Activated B cell treated with CpG ODN at 0.5 μM for 24 hours (primary cell): ENCODE measurements at regions of chr13 and their contacts with region 1.

Region 1: GRCh38 chr13:28658796-28659620 is at the start of gene POMP:
- DNase-seq: peak; percentile 96
- ATAC-seq: peak; percentile 92
- H3K4me3 Mint-ChIP-seq: peak within 1 kb of the TSS; percentile 98
- H3K27ac Mint-ChIP-seq: peak within 1 kb of the TSS; percentile 93
- H3K4me1 Mint-ChIP-seq: peaks cover 62% of the 10 kb centered on the region
- H3K27me3 Mint-ChIP-seq: no peaks in the 10 kb centered on the region
- CTCF ChIP-seq: no peak
- total RNA-seq, gene POMP: 54.0 and 56.0 TPM in 2 replicates

Region 2: DNA sequence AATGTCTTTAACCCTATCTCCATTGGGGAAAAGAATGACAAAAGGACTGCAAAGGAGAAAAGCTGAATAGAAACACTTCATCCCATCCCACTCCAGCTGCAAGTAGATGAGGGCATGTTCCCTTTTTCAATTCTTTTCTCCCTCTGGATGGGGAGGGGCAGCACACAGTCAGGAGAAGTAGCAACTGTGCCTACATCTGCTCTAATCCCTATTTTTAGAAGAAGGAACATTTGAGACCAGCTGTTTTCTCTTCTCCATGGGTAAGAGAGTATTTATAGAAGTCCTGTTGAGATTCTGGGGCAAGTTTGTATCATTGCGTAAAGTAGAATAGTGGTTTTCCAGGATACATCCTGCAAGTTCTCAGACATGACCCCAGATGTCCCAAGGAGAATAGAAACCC is 1243.9 kb before region 1 on chr13:
- CTCF ChIA-PET with region 1: no interaction called
- POLR2A ChIA-PET with region 1: no interaction called
- intact Hi-C with region 1: no loop called
- DNase-seq: no peak
- ATAC-seq: no peak
- H3K4me3 Mint-ChIP-seq: no peak overlapping the region
- H3K27ac Mint-ChIP-seq: no peak overlapping the region
- H3K4me1 Mint-ChIP-seq: no peaks in the 10 kb centered on the region
- H3K27me3 Mint-ChIP-seq: peaks cover 4% of the 10 kb centered on the region
- CTCF ChIP-seq: no peak

Region 3: GRCh38 chr13:28268800-28269223 is 390.2 kb before region 1 on chr13:
- CTCF ChIA-PET with region 1: no interaction called
- POLR2A ChIA-PET with region 1: no interaction called
- intact Hi-C with region 1: loop called (anchors 2 kb)
- DNase-seq: no peak
- ATAC-seq: peak; percentile 87
- H3K4me3 Mint-ChIP-seq: peak overlapping the region; percentile 41
- H3K27ac Mint-ChIP-seq: peak overlapping the region; percentile 78
- H3K4me1 Mint-ChIP-seq: peaks cover 29% of the 10 kb centered on the region
- H3K27me3 Mint-ChIP-seq: no peaks in the 10 kb centered on the region
- CTCF ChIP-seq: no peak

Region 4: DNA sequence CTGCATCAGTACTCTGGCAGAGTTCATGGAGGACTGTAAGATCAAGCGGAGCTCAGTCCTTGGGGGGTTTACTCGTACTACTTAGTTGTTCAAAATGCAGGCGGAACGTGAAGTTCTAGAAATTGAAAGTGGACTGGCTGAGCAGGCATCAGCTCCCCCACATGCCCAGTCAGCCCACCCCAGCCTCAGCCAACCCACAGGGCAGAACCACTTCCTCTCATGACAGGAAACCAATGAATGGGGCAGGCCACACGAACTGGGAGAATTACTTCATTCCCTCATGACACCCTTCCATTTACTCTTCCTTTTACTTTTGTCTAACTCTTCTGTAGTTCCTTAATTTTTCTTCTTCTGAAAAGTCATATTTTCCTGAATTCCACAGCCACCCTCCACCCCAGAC is 236.0 kb before region 1 on chr13:
- CTCF ChIA-PET with region 1: no interaction called
- POLR2A ChIA-PET with region 1: interaction called, 12 read pairs
- intact Hi-C with region 1: no loop called
- DNase-seq: peak; percentile 48
- ATAC-seq: peak; percentile 99
- H3K4me3 Mint-ChIP-seq: peak overlapping the region; percentile 76
- H3K27ac Mint-ChIP-seq: peak overlapping the region; percentile 85
- H3K4me1 Mint-ChIP-seq: peaks cover 28% of the 10 kb centered on the region
- H3K27me3 Mint-ChIP-seq: no peaks in the 10 kb centered on the region
- CTCF ChIP-seq: no peak

Region 5: DNA sequence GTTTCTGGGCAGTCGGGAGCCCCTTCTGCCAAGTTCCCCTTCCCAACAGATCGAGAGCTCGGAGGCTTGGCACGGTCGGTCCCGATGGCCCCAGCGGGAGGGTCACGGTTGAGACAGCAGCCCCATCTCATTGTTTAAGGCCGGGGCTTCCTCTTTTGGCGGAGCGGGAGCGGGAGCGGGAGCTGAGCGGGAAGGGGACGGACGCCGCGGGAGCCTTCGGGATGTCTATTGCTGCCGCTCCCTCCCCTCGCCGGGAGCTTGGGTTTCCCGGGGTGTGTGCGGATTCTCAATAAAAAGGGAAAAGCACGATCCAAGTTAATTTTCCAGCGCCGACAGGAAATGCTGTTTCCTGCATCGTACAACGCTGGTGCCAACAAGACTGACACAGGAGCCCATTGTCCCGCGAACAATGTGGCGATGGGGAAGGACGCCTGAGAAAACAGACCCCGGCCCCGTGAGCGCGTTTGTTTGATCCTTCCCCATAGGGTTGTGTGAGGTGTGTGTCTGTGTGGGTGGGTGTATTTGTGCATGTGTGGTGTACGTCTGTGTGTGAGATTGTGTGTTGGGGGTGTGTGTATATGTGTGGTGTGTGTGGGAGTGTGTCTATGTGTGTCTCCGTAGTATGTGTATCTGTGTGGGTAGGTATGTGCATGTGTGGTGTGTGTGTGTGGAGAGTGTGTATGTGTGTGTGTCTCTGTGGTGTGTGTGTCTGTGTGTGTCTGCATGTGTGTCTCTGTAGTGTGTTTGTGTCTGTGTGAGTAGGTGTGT is 127.7 kb before region 1 on chr13:
- CTCF ChIA-PET with region 1: no interaction called
- POLR2A ChIA-PET with region 1: no interaction called
- intact Hi-C with region 1: loop called (anchors 2 kb)
- DNase-seq: no peak
- ATAC-seq: no peak
- H3K4me3 Mint-ChIP-seq: no peak overlapping the region
- H3K27ac Mint-ChIP-seq: no peak overlapping the region
- H3K4me1 Mint-ChIP-seq: peaks cover 30% of the 10 kb centered on the region
- H3K27me3 Mint-ChIP-seq: peaks cover 32% of the 10 kb centered on the region
- CTCF ChIP-seq: no peak

Region 6: GRCh38 chr13:28707629-28708427 is 48.8 kb after region 1 on chr13:
- CTCF ChIA-PET with region 1: no interaction called
- POLR2A ChIA-PET with region 1: interaction called, 4 read pairs
- intact Hi-C with region 1: loop called (anchors 2 kb)
- DNase-seq: no peak
- ATAC-seq: peak; percentile 95
- H3K4me3 Mint-ChIP-seq: peak overlapping the region; percentile 3
- H3K27ac Mint-ChIP-seq: peak overlapping the region; percentile 14
- H3K4me1 Mint-ChIP-seq: peaks cover 9% of the 10 kb centered on the region
- H3K27me3 Mint-ChIP-seq: no peaks in the 10 kb centered on the region
- CTCF ChIP-seq: no peak

Region 7: DNA sequence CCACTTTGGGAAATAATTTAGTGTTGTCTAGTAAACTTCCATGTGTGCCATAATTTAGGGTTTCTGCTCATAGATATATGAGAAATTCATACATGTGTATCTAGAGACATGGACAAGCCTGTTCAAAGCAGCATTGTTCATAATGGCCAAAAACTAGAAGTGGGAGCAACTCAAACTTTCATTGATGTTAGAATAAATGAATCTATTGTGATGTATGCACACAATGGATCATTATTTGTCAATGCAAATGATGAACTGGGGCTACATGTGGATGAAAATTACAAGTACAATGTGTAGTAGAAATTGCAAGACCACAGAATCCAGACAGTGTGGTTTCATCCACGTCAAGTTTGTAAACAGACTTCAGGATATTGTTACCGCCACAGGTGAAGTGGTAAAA is 651.8 kb after region 1 on chr13:
- CTCF ChIA-PET with region 1: no interaction called
- POLR2A ChIA-PET with region 1: no interaction called
- intact Hi-C with region 1: no loop called
- DNase-seq: no peak
- ATAC-seq: no peak
- H3K4me3 Mint-ChIP-seq: no peak overlapping the region
- H3K27ac Mint-ChIP-seq: no peak overlapping the region
- H3K4me1 Mint-ChIP-seq: no peaks in the 10 kb centered on the region
- H3K27me3 Mint-ChIP-seq: peaks cover 6% of the 10 kb centered on the region
- CTCF ChIP-seq: no peak